ENCODE measurements at regions of chr12 and their contacts with region 1.

Region 1: DNA sequence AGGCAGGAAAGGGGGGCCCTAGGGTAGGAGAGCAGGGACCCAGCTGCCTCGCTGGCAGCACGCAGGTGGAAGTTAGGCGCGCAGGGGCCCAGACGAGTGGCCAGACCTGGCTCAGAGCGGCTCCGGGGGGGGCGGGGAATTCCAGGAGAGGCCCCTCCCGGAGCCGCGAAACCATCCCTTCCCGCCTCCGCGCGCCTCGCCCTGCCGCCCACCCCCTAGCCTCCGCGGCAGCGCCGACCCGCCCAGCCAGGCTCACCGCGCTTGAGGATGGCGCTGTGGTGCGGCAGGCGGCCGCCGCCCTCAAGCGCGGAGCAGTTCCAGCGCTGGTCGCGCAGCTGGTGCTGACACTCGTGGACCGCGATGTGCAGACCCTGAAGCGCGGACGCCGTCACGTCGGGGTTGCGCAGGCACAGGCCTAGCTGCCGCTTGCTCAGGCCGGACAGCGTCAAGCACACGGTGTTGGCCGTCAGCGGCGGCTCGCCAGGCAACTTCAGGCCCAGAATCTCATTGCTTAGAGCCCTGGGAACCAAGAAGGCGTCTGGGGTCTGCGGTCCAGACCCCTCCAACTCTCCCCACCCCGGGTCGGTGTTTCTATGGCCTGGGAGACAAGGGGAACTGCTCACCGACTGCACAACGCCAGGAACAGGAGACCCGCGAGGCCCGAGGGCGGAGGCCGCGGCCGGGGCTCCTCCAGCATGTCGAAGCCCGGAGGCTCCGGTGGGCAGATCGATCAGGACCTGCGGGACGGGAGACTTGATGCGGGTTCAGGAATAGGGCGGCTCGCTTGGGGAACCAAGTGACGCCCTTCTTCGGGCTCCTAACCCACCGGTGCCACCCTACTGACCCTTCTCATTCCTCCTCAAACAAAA is 1.5 kb downstream of the WNT10B start:
- DNase-seq: no peak
- H3K4me3 ChIP-seq: no peak overlapping the region
- H3K27ac ChIP-seq: no peak overlapping the region
- H3K4me1 ChIP-seq: no peaks in the 10 kb centered on the region
- H3K27me3 ChIP-seq: peaks cover 56% of the 10 kb centered on the region in 2 experiments
- CTCF ChIP-seq: no peak
- POLR2A ChIP-seq: no peak

Region 2: GRCh38 chr12:48995061-48995879 is 25.2 kb after region 1 on chr12:
- CTCF ChIA-PET with region 1: interaction called, 16 read pairs
- POLR2A ChIA-PET with region 1: no interaction called
- dilution Hi-C with region 1: no loop called
- intact Hi-C with region 1: loop called (anchors 1 kb)
- DNase-seq: peak; percentile 77
- H3K4me3 ChIP-seq: no peak overlapping the region
- H3K27ac ChIP-seq: no peak overlapping the region
- H3K4me1 ChIP-seq: peaks cover 11% of the 10 kb centered on the region
- H3K27me3 ChIP-seq: peaks cover 25 to 26% of the 10 kb centered on the region in 2 experiments
- CTCF ChIP-seq: peak; percentile 69 to 85
- POLR2A ChIP-seq: no peak

Region 3: DNA sequence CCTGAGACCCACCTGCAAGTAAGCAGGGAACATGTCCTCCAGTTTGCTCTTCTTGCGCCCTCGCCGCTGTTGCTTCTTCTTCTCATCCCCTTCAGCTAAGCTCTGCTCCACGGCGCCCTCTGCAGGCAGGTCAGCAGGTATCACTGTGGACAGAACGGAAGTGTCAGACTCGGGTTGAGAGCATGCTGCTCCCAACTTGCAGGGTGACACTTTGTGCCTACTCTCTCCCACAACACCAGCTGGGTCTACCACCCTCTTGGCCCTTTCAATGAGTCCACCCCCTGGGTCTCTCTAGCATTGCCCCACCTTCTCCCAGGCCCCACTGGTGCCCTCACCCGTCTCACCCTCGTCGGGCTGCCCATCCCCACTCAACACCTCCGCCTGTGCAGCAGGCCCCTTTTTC is 73.8 kb after region 1 on chr12:
- CTCF ChIA-PET with region 1: no interaction called
- POLR2A ChIA-PET with region 1: no interaction called
- dilution Hi-C with region 1: no loop called
- intact Hi-C with region 1: no loop called
- DNase-seq: peak; percentile 39
- H3K4me3 ChIP-seq: no peak overlapping the region
- H3K27ac ChIP-seq: no peak overlapping the region
- H3K4me1 ChIP-seq: no peaks in the 10 kb centered on the region
- H3K27me3 ChIP-seq: no peaks in the 10 kb centered on the region
- CTCF ChIP-seq: peak; percentile 68 to 75
- POLR2A ChIP-seq: no peak